ENCODE measurements at regions of chr12 and their contacts with region 1.

Region 1: DNA sequence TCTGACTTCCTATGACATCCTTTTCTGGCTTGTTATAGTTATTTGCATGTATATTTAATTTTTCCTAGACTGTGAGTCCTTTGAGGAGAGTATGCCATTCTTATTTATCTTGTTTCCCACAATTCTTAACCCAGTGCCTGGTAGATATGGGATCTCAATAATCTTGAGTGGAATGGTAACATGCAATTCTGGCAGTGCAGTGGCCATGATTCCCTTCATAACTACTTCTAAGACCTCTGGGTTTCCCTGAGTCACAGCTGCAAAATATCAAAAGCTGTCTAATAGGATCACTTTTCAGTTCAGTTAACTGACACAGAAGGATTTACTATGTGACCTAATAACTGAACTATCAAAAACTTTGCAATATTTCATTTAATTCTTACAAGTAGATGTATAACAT is 135.0 kb downstream of the ADAMTS20 start:
- DNase-seq: no peak
- H3K4me3 ChIP-seq: no peak overlapping the region
- H3K27ac ChIP-seq: no peak overlapping the region
- H3K4me1 ChIP-seq: no peaks in the 10 kb centered on the region
- H3K27me3 ChIP-seq: no peaks in the 10 kb centered on the region
- CTCF ChIP-seq: no peak

Region 2: DNA sequence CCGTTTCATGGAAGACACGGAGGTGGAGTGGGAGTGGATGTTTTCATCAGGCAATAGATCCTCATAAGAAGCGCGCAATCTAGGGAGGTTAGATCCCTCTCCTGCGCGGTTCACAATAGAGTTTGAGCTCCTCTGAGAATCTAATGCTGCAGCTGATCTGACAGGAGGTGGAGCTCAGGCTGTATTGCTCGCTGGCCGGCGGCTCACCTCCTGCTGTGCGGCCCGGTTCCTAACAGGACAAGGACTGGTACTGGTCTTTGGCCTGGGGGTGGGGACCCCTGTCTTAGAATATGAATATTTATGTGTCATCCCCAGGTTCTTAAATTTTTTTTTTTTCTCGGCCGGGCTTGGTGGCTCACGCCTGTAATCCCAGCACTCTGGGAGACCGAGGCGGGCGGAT is 864.2 kb before region 1 on chr12:
- intact Hi-C with region 1: loop called (anchors 10 kb)
- DNase-seq: no peak
- H3K4me3 ChIP-seq: no peak overlapping the region
- H3K27ac ChIP-seq: no peak overlapping the region
- H3K4me1 ChIP-seq: no peaks in the 10 kb centered on the region
- H3K27me3 ChIP-seq: no peaks in the 10 kb centered on the region
- CTCF ChIP-seq: no peak

Region 3: GRCh38 chr12:43210485-43211192 is 206.3 kb before region 1 on chr12:
- intact Hi-C with region 1: no loop called
- DNase-seq: no peak
- H3K4me3 ChIP-seq: no peak overlapping the region
- H3K27ac ChIP-seq: no peak overlapping the region
- H3K4me1 ChIP-seq: no peaks in the 10 kb centered on the region
- H3K27me3 ChIP-seq: no peaks in the 10 kb centered on the region
- CTCF ChIP-seq: no peak

Region 4: GRCh38 chr12:43480591-43480990 is 63.6 kb after region 1 on chr12:
- intact Hi-C with region 1: no loop called
- DNase-seq: no peak
- H3K4me3 ChIP-seq: no peak overlapping the region
- H3K27ac ChIP-seq: no peak overlapping the region
- H3K4me1 ChIP-seq: no peaks in the 10 kb centered on the region
- H3K27me3 ChIP-seq: no peaks in the 10 kb centered on the region
- CTCF ChIP-seq: no peak

Region 5: DNA sequence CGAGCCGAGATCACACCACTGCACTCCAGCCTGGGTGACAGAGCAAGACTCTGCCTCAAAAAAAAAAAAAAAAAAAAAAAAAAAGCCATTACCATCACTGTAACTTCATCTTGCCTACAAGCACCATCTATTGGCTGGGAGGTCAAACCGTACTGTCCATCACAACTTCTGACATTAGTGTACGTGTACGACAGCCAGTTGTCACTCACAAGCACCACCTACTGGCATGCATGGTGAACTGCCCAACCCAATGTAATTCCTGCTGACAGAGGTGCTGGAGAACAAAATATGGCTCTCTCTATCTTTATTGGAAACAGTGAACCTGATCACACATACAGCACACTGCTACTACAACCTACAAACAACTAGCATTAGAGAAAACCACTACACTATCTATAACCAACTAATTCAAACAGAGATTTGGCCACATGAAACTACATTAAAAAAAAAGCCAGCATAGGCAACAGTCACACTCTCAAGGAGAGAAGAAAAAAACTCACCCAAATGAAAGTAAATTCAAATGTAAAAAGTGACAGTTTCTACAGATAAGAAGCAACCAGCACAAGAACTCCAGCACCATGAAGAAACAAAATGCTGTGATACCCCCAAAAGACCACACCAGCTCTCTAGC is 259.3 kb after region 1 on chr12:
- intact Hi-C with region 1: no loop called
- DNase-seq: no peak
- H3K4me3 ChIP-seq: no peak overlapping the region
- H3K27ac ChIP-seq: no peak overlapping the region
- H3K4me1 ChIP-seq: no peaks in the 10 kb centered on the region
- H3K27me3 ChIP-seq: no peaks in the 10 kb centered on the region
- CTCF ChIP-seq: no peak

Measured in colonic mucosa (tissue), 4 donors.